ENCODE measurements at regions of chr14 and their contacts with region 1.

Region 1: DNA sequence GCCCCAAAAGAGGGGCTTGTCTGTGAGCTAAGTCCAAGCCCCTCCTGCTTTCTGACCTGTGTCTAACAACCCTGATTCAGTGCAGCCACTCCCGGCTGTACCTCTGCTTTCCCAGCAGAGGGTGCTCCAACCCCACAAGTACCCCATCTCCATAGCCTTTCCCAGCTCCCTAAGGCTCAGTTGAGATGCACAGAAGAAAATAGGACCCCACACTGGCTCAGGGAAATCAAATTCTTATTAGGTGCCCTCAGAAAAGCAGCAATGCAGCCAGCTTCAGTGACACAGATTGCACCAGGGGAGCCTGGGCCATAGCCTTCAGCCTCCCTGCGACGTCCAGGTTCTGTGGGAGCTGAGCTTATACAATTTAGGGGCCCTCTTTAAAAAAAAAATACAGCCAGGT is 49.9 kb downstream of the LRRC74A start:
- DNase-seq: no peak
- H3K4me3 ChIP-seq: no peak overlapping the region
- H3K27ac ChIP-seq: no peak overlapping the region
- H3K4me1 ChIP-seq: peaks cover 0 to 9% (median 0%) of the 10 kb centered on the region in 6 donors
- H3K27me3 ChIP-seq: no peaks in the 10 kb centered on the region
- CTCF ChIP-seq: peak; percentile 88 to 95 (median 91)
- POLR2A ChIP-seq: no peak

Region 2: DNA sequence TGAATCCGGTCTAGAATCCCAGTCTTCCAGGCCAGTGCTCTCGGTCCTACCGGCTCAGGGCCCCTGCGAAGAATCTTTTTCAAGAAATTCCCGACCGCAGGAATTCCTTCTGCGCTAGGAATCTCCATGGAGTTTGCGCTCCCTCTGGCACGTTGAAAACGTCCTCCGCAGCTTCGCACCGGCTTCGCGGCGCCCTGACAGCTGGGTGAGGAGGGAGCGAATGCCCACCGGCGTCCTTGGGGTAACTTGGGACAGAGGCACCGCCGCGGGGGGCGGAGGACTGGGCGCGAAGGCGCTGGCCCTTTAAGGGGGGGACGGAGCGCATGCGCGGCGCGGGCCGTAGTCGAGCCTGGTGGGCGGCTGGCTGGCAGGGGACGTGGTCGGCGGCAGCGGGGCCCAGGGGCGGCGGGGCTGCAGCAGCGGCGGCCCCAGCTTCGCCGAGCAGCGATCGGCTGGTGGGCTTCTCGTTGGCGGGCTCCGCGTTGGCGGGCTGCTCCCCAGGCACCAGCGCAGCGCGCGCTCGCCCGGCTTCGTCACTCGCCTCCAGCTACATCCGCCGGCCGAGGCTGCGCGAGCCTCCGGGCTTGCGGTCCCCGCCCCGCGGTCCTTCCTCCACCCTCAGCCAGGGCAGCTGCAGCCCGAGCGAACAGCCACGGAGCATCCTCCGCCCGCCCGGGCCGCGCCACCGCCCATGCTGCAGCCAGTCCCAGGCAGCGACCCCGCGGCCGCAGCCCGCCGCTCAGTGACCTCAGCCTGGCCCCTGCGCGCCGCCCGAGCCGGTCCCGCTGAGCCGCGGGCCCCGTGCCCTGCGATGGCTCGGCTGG is 114.7 kb before region 1 on chr14 and contains the start of gene VASH1:
- intact Hi-C with region 1: no loop called
- DNase-seq: peak; percentile 92
- H3K4me3 ChIP-seq: peak within 1 kb of the TSS; percentile 64 to 97 (median 75)
- H3K27ac ChIP-seq: peak within 1 kb of the TSS; percentile 35 to 91 (median 80)
- H3K4me1 ChIP-seq: peaks cover 6 to 60% (median 38%) of the 10 kb centered on the region in 6 donors
- H3K27me3 ChIP-seq: peaks cover 0 to 35% (median 14%) of the 10 kb centered on the region in 7 donors
- CTCF ChIP-seq: no peak
- POLR2A ChIP-seq: peak in 1 of 3 donors; percentile 40
- total RNA-seq, gene VASH1: 16.9 to 39.1 (median 27.3) TPM

Region 3: DNA sequence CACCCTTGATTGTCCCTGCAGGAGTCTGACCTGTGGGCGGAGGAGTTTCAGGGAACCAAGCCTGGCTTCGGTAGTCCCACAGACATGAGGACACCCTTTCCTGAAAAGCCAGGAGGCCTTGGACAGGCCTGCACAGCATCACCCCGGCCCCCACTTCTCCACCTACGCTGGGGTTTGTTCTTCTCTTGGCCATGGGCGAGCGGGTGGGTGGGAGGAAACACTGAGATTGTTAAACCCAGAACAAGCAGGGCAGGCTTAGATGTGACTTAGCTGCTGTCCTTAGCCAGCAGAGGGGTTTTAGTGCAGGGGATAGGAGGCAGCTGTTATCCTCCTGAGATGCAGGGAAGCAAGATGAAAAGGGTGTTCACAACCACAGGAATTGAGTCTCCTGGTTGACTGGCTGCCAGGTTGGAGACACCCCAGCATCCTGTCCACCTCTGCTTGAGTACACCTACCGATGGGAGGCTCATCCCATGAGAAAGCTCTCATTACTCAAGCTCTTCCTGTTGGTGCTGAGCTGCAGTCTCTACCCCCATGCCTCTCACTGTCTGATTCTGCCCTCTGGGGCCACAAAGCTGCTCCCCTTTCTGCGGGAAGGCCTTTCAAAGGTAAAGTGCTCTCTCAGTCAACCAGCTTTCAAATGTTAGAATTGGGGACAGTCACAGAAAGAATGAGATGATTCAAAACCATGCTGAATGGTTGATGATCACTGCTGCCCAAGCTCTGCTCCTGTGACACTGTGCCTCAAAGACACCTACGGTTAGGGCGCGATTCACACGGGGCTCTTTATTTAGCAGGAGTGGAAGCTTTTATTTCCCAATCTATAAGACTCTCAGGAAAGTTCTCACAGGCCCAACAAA is 66.1 kb after region 1 on chr14:
- intact Hi-C with region 1: no loop called
- DNase-seq: no peak
- H3K4me3 ChIP-seq: no peak overlapping the region
- H3K27ac ChIP-seq: peak overlapping the region in 5 of 8 donors; percentile 1 to 54 (median 42)
- H3K4me1 ChIP-seq: peaks cover 4 to 25% (median 12%) of the 10 kb centered on the region in 6 donors
- H3K27me3 ChIP-seq: no peaks in the 10 kb centered on the region
- CTCF ChIP-seq: no peak
- POLR2A ChIP-seq: no peak

Region 4: DNA sequence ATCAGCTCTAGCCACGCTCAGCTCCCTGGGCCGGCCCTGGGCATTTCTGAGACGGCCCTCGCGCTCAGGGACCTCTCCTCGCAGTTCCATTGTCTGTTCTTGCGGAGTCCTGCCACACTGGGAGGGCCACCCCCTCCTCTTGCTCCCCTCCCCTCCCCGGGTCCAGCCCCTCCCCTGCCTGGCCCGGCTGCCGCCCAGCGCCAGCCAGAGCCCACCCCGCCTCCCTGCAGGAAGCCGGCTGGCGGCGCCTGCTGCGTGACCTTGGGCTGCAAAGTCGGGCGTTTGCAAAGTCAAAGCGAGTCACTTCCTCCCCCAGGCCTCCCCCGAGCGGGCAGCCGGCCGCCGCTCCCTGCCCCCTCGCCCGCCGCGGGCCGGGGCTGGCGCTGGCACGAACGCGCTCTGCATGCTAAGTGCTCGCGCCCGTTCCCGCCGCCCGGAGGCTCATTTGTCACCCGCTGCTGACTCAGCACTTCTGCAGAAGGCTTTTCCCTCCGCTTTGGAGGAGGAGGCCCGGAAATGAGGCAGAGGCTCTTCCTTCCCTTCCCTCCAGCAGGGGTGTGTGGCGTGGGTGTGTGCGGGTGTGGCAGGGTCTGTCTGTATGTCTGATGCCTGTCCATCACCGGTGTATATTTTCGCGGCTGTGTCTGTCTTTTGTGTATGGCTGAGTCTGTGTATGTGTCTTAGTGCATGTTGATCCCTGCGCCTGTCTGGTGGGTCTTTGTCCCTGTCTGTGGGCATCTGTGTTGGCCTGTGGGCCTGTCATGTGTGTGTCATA is 80.4 kb after region 1 on chr14:
- intact Hi-C with region 1: no loop called
- DNase-seq: peak; percentile 97
- H3K4me3 ChIP-seq: peak overlapping the region; percentile 12 to 70 (median 40)
- H3K27ac ChIP-seq: peak overlapping the region; percentile 91 to 99 (median 97)
- H3K4me1 ChIP-seq: peaks cover 44 to 98% (median 75%) of the 10 kb centered on the region in 6 donors
- H3K27me3 ChIP-seq: no peaks in the 10 kb centered on the region
- CTCF ChIP-seq: peak in 7 of 11 experiments; percentile 15 to 72 (median 47)
- POLR2A ChIP-seq: peak in 2 of 3 donors; percentile 9 to 42

Region 5: GRCh38 chr14:77071938-77072824 is 196.1 kb after region 1 on chr14:
- intact Hi-C with region 1: loop called (anchors 2 kb)
- DNase-seq: no peak
- H3K4me3 ChIP-seq: no peak overlapping the region
- H3K27ac ChIP-seq: peak overlapping the region in 3 of 8 donors; percentile 25 to 91 (median 47)
- H3K4me1 ChIP-seq: peaks cover 0 to 58% (median 30%) of the 10 kb centered on the region in 6 donors
- H3K27me3 ChIP-seq: peaks cover 0 to 22% (median 0%) of the 10 kb centered on the region in 7 donors
- CTCF ChIP-seq: no peak
- POLR2A ChIP-seq: no peak